ENCODE measurements at regions of chr3 and their contacts with region 1.

Region 1: GRCh38 chr3:182713743-182714517 is 79.4 kb upstream of the ATP11B start:
- DNase-seq: no peak
- ATAC-seq: peak; percentile 56
- H3K4me3 Mint-ChIP-seq: no peak overlapping the region
- H3K27ac Mint-ChIP-seq: no peak overlapping the region
- H3K4me1 Mint-ChIP-seq: peaks cover 21% of the 10 kb centered on the region
- H3K27me3 Mint-ChIP-seq: no peaks in the 10 kb centered on the region

Region 2: GRCh38 chr3:182790612-182791011 is 76.7 kb after region 1 on chr3:
- CTCF ChIA-PET with region 1: interaction called, 12 read pairs
- DNase-seq: no peak
- ATAC-seq: no peak
- H3K4me3 Mint-ChIP-seq: no peak overlapping the region
- H3K27ac Mint-ChIP-seq: no peak overlapping the region
- H3K4me1 Mint-ChIP-seq: peaks cover 3% of the 10 kb centered on the region
- H3K27me3 Mint-ChIP-seq: peaks cover 16% of the 10 kb centered on the region